ENCODE measurements at regions of chr16 and their contacts with region 1.

Region 1: GRCh38 chr16:69709456-69710084 is 16.8 kb downstream of the NQO1 start:
- DNase-seq: peak in 2 of 7 donors; percentile 13 to 43
- H3K4me3 ChIP-seq: no peak overlapping the region
- H3K27ac ChIP-seq: peak overlapping the region in 3 of 5 donors; percentile 23 to 52 (median 39)
- H3K4me1 ChIP-seq: peaks cover 0 to 6% of the 10 kb centered on the region in 2 donors
- H3K27me3 ChIP-seq: no peaks in the 10 kb centered on the region
- CTCF ChIP-seq: peak; percentile 68 to 90 (median 82)
- POLR2A ChIP-seq: no peak

Region 2: GRCh38 chr16:69754469-69755310 is 45.1 kb after region 1 on chr16 and contains the start of gene NOB1:
- intact Hi-C with region 1: loop called (anchors 2 to 5 kb)
- DNase-seq: peak; percentile 95 to 97 (median 96)
- H3K4me3 ChIP-seq: peak within 1 kb of the TSS; percentile 35 to 100 (median 80)
- H3K27ac ChIP-seq: peak within 1 kb of the TSS in 4 of 5 donors; percentile 20 to 86 (median 78)
- H3K4me1 ChIP-seq: peaks cover 12 to 19% of the 10 kb centered on the region in 2 donors
- H3K27me3 ChIP-seq: no peaks in the 10 kb centered on the region
- CTCF ChIP-seq: peak; percentile 94 to 100 (median 99)
- POLR2A ChIP-seq: peak; percentile 32 to 62
- total RNA-seq, gene NOB1: 26.9 to 98.4 (median 76.4) TPM

Region 3: DNA sequence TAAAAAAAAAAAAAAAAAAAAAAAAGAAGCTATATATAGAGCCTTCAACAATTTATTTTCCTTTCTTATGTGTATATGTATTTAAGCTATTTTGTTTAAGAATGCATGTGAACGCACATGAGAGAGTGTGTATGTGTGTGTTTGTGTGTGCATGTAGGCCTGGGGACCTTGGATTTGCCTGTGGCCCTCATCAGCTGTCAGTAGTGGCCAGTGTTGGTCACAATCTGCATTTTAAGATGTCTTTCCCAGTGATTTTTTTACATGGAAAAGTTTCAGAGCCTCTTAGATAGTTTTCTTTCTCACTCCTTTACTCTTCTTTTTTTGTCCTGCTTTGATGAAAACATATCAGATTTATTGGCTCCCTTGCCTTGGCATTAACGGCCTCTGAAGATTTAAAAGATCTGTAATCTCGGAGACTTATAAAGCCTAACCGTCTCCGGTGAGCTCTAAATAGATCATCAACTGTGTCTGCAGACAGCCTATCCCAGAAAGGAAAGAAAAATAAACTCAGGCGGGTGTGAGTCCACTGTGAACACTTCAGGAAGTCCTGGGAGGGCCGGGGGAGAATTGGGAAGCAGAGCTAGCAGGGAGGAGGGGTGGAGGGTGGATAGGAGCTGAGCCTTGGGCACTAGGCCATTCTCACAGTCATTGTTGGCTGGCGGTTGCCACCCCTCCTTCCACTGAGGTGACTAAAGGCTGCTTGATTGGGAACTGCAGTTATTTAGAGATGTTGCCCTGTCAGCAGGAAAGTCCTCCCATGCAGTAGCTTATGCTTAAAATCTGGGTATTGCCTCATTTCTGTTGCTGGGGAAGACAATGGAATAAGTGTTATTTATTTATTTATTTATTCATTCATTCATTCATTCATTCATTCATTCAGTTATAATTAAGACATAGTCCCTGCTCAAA is 139.3 kb after region 1 on chr16:
- intact Hi-C with region 1: no loop called
- DNase-seq: peak; percentile 89 to 97 (median 96)
- H3K4me3 ChIP-seq: no peak overlapping the region
- H3K27ac ChIP-seq: peak overlapping the region; percentile 65 to 82 (median 76)
- H3K4me1 ChIP-seq: peaks cover 27 to 41% of the 10 kb centered on the region in 2 donors
- H3K27me3 ChIP-seq: no peaks in the 10 kb centered on the region
- CTCF ChIP-seq: peak in 2 of 6 experiments; percentile 6 to 31
- POLR2A ChIP-seq: peak in 1 of 2 donors; percentile 64